Prostate gland (tissue), 2 donors: ENCODE measurements at regions of chr19 and their contacts with region 1.

Region 1: GRCh38 chr19:35135389-35135909 is 590 bp upstream of the LGI4 start:
- DNase-seq: peak; percentile 80
- H3K4me3 ChIP-seq: no peak overlapping the region
- H3K27ac ChIP-seq: peak overlapping the region; percentile 65 to 73
- H3K4me1 ChIP-seq: peaks cover 9% of the 10 kb centered on the region
- H3K27me3 ChIP-seq: no peaks in the 10 kb centered on the region
- CTCF ChIP-seq: peak; percentile 94 to 96 (median 96)
- POLR2A ChIP-seq: no peak

Region 2: DNA sequence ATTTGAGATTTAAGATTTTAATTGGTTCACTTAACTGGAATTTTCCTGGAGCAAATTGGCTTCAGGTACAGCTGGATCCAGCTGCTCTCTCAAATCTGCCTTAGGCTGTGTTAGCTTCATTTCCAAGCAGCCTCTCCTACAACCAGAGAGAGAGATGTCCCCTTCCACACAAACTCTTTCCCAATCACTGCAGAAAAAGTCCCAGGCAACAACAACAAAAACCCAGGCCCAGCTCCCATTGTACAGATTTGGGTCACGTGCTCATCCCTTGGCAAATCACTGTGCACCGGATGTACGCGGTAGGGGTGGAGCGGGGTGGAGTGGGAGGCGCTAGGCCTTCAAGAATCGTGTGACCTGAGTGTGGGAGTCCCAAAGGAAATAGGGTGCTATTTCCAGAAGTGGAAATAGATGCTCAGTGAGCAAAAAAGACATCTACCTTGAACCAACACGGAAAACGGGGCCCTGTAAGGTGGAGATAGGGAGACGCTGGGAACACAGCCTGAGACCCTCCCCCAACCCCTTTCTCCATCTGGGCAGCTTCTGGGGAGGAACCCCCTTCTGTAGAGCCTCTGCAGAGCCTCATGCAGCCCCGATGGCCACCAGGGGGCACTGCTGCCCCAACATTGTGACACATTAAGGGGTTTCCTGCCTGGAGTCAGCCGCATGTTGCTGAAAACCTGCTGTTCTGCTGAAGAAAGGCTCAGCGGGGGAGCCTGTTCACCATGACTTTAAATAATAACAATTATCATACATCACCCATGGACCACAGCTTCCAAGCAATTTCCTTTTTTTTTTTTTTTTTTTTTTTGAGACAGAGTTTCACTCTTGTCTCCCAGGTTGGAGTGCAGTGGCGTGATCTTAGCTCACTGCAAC is 68.5 kb before region 1 on chr19:
- intact Hi-C with region 1: no loop called
- DNase-seq: peak; percentile 84
- H3K4me3 ChIP-seq: no peak overlapping the region
- H3K27ac ChIP-seq: no peak overlapping the region
- H3K4me1 ChIP-seq: no peaks in the 10 kb centered on the region
- H3K27me3 ChIP-seq: no peaks in the 10 kb centered on the region
- CTCF ChIP-seq: peak; percentile 84 to 89 (median 86)
- POLR2A ChIP-seq: no peak

Region 3: GRCh38 chr19:35114353-35115176 is 20.9 kb before region 1 on chr19:
- intact Hi-C with region 1: loop called (anchors 1 kb)
- DNase-seq: peak; percentile 84
- H3K4me3 ChIP-seq: peak overlapping the region; percentile 64 to 65
- H3K27ac ChIP-seq: peak overlapping the region; percentile 83 to 88
- H3K4me1 ChIP-seq: no peaks in the 10 kb centered on the region
- H3K27me3 ChIP-seq: no peaks in the 10 kb centered on the region
- CTCF ChIP-seq: peak; percentile 94 to 98 (median 97)
- POLR2A ChIP-seq: peak; percentile 71

Region 4: GRCh38 chr19:35195830-35196229 is 60.4 kb after region 1 on chr19:
- intact Hi-C with region 1: no loop called
- DNase-seq: no peak
- H3K4me3 ChIP-seq: no peak overlapping the region
- H3K27ac ChIP-seq: no peak overlapping the region
- H3K4me1 ChIP-seq: no peaks in the 10 kb centered on the region
- H3K27me3 ChIP-seq: no peaks in the 10 kb centered on the region
- CTCF ChIP-seq: no peak
- POLR2A ChIP-seq: no peak

Region 5: GRCh38 chr19:36672368-36672767 is 1536.9 kb after region 1 on chr19:
- intact Hi-C with region 1: no loop called
- DNase-seq: no peak
- H3K4me3 ChIP-seq: no peak overlapping the region
- H3K27ac ChIP-seq: no peak overlapping the region
- H3K4me1 ChIP-seq: no peaks in the 10 kb centered on the region
- H3K27me3 ChIP-seq: no peaks in the 10 kb centered on the region
- CTCF ChIP-seq: no peak
- POLR2A ChIP-seq: no peak